Dorsolateral prefrontal cortex (tissue), 120 donors: ENCODE measurements at regions of chr9 and their contacts with region 1.

Region 1: DNA sequence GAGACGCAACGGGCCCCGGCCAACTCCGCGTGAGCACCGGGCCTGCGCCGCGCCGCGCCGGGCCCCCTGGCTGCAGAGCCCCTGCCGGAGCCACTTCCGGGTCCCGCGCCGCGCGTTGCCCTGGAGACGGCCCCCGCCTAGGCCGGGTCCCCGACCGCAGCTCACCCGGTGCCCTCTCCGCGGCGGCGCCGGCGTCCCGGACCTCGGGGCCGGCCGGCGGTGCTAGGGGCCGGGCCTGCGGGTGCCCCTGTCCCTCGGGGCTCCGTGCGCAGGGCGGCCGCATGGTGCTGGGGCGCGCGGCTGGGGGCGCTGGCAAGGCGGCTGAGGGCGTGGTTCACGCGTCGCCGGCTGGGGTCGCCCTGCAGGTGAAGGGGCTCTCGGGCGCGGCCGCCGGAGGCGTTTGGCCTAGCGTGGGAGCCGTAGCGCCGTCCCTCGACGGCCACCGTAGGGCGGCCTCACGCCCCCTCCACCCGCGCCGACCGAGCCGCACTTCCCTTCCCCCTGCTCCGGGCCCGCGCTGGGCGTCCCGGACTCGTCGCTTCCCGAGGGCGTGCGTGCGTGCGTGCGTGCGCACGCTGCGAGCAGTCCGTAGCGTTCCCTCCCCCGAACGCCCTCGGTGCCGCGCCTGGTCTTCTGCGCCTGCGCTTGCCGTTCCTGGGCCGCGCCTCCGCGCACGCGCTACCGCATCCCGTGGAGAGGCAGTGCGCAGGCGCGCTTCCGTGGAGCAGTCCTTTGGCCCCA is at the start of gene TMEM250:
- DNase-seq: peak; percentile 80 to 93 (median 90)
- H3K4me3 ChIP-seq: peak within 1 kb of the TSS; percentile 62 to 97 (median 88)
- H3K27ac ChIP-seq: peak within 1 kb of the TSS; percentile 68 to 98 (median 94)
- H3K27me3 ChIP-seq: no peaks in the 10 kb centered on the region
- CTCF ChIP-seq: peak in 24 of 56 donors; percentile 6 to 53 (median 24)
- total RNA-seq, gene TMEM250: 19.3 to 53.2 (median 34.1) TPM

Region 2: DNA sequence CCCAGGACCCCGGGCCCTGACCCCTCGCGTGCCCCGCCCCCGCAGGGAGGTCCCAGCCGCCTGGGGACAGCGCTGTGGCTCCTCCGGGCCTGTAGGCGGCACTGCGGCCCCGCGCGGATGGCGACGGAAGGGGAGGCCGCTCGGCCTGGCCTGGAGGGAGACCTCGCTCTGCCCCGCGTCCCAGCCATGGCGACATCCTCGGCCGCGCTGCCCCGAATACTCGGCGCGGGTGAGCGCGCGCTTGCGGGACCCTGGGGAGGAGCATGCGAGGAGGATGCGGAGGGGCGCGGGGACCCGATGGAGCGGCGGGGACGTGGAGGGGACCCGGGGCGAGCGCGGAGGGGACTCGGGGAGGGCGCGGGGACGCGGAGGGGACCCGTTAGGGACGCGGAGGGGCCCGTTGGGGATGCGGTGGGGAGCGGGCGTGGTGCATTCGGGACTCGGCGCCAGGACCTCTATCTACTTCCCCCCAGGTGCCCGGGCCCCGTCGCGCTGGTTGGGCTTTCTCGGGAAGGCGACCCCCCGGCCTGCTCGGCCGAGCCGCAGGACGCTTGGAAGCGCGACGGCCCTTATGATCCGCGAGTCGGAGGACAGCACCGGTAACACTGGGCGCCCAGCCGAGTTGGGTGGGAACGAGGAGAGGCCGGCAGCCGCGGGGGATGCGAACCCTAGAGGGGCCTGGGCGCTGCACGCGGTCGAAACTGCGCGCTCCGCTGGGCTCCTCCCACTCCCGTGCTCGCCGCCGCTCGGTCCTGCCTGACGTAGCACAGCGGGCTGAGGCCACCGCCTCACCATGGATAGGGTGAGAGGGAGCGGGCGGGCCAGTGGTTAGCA is 617.7 kb before region 1 on chr9 and contains the start of gene MRPS2:
- intact Hi-C with region 1: loop called in 1 of 2 experiments (anchors 10 kb)
- DNase-seq: peak; percentile 65 to 92 (median 82)
- H3K4me3 ChIP-seq: peak within 1 kb of the TSS; percentile 62 to 100 (median 94)
- H3K27ac ChIP-seq: peak within 1 kb of the TSS in 57 of 59 donors; percentile 16 to 90 (median 77)
- H3K27me3 ChIP-seq: no peaks in the 10 kb centered on the region
- CTCF ChIP-seq: peak; percentile 54 to 94 (median 84)
- total RNA-seq, gene MRPS2: 19.8 to 41.3 (median 28.2) TPM

Region 3: GRCh38 chr9:135701959-135702721 is 416.4 kb before region 1 on chr9 and contains the start of gene KCNT1:
- intact Hi-C with region 1: loop called in 1 of 2 experiments (anchors 5 kb)
- DNase-seq: peak in 6 of 10 donors; percentile 35 to 82 (median 56)
- H3K4me3 ChIP-seq: peak within 1 kb of the TSS in 56 of 59 donors; percentile 17 to 65 (median 48)
- H3K27ac ChIP-seq: peak within 1 kb of the TSS in 35 of 59 donors; percentile 6 to 77 (median 38)
- H3K27me3 ChIP-seq: peaks cover 0 to 32% (median 0%) of the 10 kb centered on the region in 45 donors
- CTCF ChIP-seq: peak; percentile 56 to 95 (median 84)
- total RNA-seq, gene KCNT1: 46.6 to 237 (median 115) TPM

Region 4: DNA sequence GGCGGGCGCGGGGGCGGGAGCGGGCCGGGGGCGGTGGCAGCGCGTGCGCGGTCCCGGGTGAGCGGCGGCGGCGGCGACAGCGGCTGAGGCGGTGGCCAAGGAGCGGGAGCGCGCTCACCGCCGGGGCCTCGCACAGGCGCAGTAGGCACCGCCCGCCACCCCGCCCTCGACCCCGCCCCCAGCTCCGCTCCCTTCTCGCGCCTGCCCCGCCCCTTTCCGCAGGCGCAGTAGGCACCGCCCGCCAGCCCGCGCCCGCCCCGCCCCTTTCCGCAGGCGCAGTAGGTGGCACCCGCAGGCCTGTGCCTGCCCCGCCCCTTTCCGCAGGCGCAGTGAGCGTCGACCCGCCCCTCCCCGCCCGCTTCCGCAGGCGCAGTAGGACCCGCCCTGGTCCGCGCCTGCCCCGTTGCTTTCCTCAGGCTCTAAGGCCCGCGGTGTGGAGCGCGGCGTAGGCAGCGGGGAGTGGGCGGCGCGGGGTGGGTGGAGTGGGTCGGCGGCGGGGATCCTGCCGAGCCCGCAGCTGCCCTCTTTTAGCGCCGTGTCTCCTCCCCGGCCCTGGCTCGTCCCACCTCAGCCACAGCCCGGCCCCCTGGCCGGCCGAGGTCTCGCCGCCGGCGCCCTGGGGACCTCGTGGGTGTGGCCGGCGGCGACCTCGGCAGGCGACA is 210.9 kb before region 1 on chr9 and contains the start of gene CAMSAP1:
- intact Hi-C with region 1: loop called (anchors 2 to 5 kb)
- DNase-seq: peak; percentile 70 to 91 (median 84)
- H3K4me3 ChIP-seq: peak within 1 kb of the TSS; percentile 69 to 97 (median 87)
- H3K27ac ChIP-seq: peak within 1 kb of the TSS in 56 of 59 donors; percentile 5 to 91 (median 79)
- H3K27me3 ChIP-seq: no peaks in the 10 kb centered on the region
- CTCF ChIP-seq: peak in 7 of 56 donors; percentile 7 to 28 (median 18)
- total RNA-seq, gene CAMSAP1: 59.6 to 100 (median 81.1) TPM

Region 5: GRCh38 chr9:136045971-136046920 is 72.2 kb before region 1 on chr9:
- intact Hi-C with region 1: loop called in 1 of 2 experiments (anchors 5 kb)
- DNase-seq: no peak
- H3K4me3 ChIP-seq: peak overlapping the region in 27 of 59 donors; percentile 2 to 81 (median 27)
- H3K27ac ChIP-seq: peak overlapping the region in 50 of 59 donors; percentile 5 to 99 (median 64)
- H3K27me3 ChIP-seq: no peaks in the 10 kb centered on the region
- CTCF ChIP-seq: no peak

Region 6: GRCh38 chr9:136089697-136090045 is 28.8 kb before region 1 on chr9:
- intact Hi-C with region 1: loop called (anchors 1 to 2 kb)
- DNase-seq: no peak
- H3K4me3 ChIP-seq: peak overlapping the region in 2 of 59 donors; percentile 15 to 30
- H3K27ac ChIP-seq: peak overlapping the region in 42 of 59 donors; percentile 6 to 94 (median 65)
- H3K27me3 ChIP-seq: no peaks in the 10 kb centered on the region
- CTCF ChIP-seq: peak in 53 of 56 donors; percentile 23 to 73 (median 50)